ENCODE measurements at regions of chr13 and their contacts with region 1.

Region 1: DNA sequence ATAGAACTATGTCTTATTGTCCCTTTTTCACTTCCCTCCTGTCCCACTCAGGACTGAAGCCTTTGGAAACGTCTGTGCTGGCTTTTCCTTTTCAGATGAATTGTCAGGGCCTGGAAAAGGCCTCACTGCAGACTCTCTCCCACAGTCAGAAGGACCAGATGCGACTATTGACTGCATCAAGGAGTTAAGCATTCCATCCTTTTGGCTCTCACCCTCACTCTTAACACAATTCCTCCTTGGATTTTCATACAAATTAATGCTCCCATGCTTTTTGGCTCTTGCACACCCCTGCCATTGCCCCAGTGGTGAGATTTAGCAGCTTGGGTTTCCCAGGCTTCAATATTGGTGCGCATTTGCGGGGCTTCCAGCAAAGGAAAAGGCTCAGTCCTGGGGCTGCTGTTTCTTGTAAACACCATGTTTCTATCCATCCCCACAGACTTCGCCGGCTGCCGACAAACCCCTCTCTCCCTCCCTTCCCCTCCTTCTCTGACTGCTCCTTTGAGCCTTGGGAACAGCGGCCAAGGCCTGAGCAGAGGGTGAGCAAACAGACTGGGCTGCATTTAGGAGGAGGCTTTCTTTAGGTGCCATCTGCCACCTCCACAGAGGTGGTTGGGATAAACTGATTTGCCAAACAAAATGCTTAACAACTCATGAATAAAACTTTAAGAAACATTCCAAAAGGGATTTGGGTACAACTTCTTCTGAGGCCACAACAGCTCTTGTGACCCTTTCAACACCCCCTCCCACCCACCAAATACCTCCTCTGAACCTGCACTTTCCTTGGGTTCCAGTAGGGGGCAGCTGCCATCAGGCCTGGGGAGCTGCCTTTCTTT is 48.6 kb upstream of the PCDH8 start:
- DNase-seq: peak; percentile 71
- ATAC-seq: peak; percentile 88
- H3K4me3 Mint-ChIP-seq: no peak overlapping the region
- H3K27ac Mint-ChIP-seq: no peak overlapping the region
- H3K4me1 Mint-ChIP-seq: peaks cover 58% of the 10 kb centered on the region
- H3K27me3 Mint-ChIP-seq: peaks cover 34% of the 10 kb centered on the region
- CTCF ChIP-seq: peak; percentile 90

Region 2: DNA sequence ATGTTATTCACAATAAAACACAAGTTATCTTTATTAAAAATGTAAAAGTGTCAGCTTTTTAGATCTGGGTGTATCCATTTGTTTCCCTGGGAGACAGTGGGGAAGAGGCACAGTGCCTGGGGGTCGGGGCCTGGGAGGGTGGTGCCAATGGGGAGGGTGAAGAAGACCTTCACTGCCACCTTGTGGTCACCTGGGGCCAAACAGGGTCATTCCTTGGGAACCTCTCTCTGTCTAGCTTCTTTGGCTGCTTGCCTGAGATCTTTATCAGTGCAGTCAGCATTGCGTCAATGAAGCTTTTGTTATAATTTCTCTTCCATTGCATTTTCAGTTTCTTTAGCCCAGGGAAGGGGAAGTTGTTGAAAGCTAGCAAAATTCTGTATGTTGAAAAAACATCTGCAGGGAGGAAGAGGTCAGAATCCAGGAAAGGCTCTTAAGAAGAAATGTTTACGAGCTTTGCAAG is 87.7 kb before region 1 on chr13:
- CTCF ChIA-PET with region 1: no interaction called
- POLR2A ChIA-PET with region 1: no interaction called
- DNase-seq: peak; percentile 83
- ATAC-seq: peak; percentile 96
- H3K4me3 Mint-ChIP-seq: no peak overlapping the region
- H3K27ac Mint-ChIP-seq: no peak overlapping the region
- H3K4me1 Mint-ChIP-seq: peaks cover 16% of the 10 kb centered on the region
- H3K27me3 Mint-ChIP-seq: no peaks in the 10 kb centered on the region
- CTCF ChIP-seq: peak; percentile 80

Region 3: DNA sequence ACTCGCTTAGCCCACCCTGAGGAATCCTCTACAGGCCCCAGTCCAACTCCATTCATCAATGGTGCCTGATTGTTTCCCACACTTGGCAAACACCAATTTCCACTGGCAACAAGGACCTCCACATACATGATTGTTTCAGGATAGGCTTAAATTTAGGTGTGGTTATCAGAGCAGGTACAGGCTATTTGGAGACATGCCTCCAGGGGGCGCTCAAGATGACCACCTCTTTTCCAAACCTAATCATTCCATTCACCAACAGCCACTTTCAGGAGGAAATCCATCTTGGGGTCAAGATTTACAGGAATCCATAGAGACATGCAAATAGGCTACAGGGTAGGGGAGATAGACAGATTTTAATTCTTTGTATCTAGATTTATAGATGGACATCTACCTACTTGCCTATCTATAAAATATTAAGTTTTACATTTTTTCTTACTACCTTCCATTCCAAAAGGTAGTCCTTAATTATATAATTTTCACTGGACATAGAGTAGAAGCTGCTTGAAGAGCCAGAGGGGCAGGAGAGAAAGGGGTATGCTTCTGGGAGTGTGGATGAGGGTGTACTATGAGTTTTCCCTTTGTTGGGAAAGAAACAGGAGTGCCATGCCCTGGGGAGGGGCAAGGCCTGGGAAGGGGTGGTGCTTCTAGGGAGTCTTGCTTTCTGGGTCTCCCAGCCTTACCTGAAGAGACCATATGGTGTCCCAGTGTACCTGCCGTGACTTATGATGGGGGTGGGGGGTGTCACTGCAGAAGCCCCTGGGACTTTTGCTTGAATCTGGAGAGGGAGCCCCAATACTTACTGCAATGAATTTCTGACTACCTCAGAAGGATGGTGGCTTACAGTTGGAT is 34.5 kb before region 1 on chr13:
- CTCF ChIA-PET with region 1: interaction called, 10 read pairs
- POLR2A ChIA-PET with region 1: no interaction called
- DNase-seq: peak; percentile 74
- ATAC-seq: peak; percentile 85
- H3K4me3 Mint-ChIP-seq: no peak overlapping the region
- H3K27ac Mint-ChIP-seq: no peak overlapping the region
- H3K4me1 Mint-ChIP-seq: peaks cover 18% of the 10 kb centered on the region
- H3K27me3 Mint-ChIP-seq: peaks cover 48% of the 10 kb centered on the region
- CTCF ChIP-seq: peak; percentile 80

Region 4: DNA sequence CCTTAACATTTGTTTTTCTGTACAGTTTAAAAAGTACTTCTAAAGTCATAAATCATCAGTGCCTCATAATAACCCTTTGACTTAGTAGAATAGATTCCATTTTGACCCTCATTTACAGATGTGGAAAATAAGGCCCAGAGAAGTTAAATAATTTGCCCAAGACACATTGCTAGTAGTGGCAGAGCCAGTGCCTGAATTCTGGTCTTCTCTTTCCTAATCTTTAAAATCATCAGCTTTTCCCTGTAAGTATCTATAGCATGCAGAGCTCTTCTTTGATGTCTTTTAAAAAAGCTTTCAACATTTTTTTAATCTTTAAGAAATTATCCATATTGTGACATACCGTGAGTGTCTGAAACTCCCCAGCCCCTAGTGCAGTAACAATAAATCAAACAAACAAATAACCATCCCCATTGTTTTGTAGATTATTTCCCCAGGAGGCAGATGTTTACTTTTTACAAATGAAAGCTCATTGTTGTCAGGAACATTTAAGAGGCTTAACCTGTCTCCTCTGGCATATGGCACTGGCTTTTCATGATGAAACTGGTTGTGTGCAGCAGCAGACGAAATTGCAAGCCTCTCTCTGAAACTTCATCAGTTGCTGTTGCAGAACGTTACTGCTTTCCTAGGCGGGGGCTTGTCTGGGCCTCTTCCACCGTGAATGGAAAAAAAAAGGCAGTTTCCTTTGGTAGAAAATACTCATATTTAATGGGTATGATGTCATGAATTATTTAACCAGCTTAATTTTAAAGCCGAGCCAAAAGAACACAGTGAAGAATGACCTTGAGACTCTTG is 16.9 kb before region 1 on chr13:
- CTCF ChIA-PET with region 1: interaction called, 17 read pairs
- POLR2A ChIA-PET with region 1: no interaction called
- DNase-seq: peak; percentile 26
- ATAC-seq: peak; percentile 85
- H3K4me3 Mint-ChIP-seq: peak overlapping the region; percentile 47
- H3K27ac Mint-ChIP-seq: peak overlapping the region; percentile 19; the same call in 1 of the 2 replicates
- H3K4me1 Mint-ChIP-seq: peaks cover 62% of the 10 kb centered on the region
- H3K27me3 Mint-ChIP-seq: peaks cover 98% of the 10 kb centered on the region
- CTCF ChIP-seq: no peak

Region 5: DNA sequence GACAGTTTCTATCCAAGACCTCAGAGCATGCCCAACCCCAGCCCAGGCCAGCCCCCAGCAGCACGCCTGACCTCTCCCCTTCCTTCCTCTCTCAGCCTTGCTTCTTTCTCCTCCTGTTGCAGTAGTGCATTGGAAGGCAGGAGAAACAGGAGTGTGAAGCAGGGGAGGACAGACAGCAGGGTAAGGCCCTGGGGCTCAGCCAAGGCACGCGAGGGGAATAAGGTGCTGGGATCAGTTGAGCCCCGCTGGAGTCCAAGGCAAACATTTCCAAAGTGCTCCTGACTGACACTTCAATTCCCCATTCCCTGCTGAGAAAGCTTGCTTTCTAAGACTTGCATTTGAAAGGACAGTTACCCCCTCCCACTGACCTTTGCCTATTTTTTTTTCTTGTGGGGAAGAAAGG is 58.4 kb after region 1 on chr13:
- CTCF ChIA-PET with region 1: interaction called, 25 read pairs
- POLR2A ChIA-PET with region 1: no interaction called
- DNase-seq: peak; percentile 53
- ATAC-seq: peak; percentile 88
- H3K4me3 Mint-ChIP-seq: peak overlapping the region; percentile 47
- H3K27ac Mint-ChIP-seq: peak overlapping the region; percentile 84
- H3K4me1 Mint-ChIP-seq: peaks cover 68% of the 10 kb centered on the region
- H3K27me3 Mint-ChIP-seq: peaks cover 41% of the 10 kb centered on the region
- CTCF ChIP-seq: no peak

Region 6: DNA sequence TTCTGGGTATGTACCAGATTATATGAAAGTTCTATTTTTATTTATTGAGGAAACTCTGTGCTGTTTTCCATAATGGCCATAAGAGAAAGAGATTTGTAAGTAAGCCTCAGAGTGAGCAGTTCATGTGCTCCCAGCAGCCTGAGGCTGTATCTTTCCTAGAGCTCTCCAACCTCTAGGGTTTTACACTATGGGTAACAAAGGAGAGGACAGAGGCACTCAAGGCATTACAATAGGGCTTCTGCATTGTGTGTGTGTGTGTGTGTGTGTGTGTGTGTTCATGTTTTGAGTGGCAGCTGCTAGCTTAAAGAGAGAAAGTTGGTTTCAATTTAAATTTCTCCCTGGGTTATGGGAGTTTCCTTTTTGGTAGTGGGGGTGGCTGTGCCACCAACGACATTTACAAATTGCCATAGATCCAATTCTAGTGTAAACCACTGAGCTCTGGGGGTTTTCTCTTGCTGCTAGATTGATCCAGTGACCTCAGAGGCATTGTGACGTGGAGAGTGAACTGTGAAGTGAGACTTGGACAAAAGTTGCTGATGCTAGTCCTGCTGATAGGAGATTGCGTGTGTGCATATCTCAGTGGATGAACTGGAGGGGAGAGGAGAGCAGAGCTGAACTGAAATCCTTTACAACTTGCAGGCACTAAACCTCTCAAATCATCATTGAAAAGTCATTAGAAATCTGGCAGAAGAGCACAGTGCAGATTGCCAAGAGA is 64.3 kb after region 1 on chr13:
- CTCF ChIA-PET with region 1: interaction called, 80 read pairs
- POLR2A ChIA-PET with region 1: no interaction called
- DNase-seq: no peak
- ATAC-seq: peak; percentile 86
- H3K4me3 Mint-ChIP-seq: no peak overlapping the region
- H3K27ac Mint-ChIP-seq: no peak overlapping the region
- H3K4me1 Mint-ChIP-seq: peaks cover 27% of the 10 kb centered on the region
- H3K27me3 Mint-ChIP-seq: peaks cover 38% of the 10 kb centered on the region
- CTCF ChIP-seq: no peak

Region 7: GRCh38 chr13:53200498-53201453 is 303.7 kb after region 1 on chr13:
- CTCF ChIA-PET with region 1: interaction called, 11 read pairs
- POLR2A ChIA-PET with region 1: no interaction called
- DNase-seq: peak; percentile 90
- ATAC-seq: peak; percentile 78
- H3K4me3 Mint-ChIP-seq: peak overlapping the region; percentile 55
- H3K27ac Mint-ChIP-seq: no peak overlapping the region
- H3K4me1 Mint-ChIP-seq: no peaks in the 10 kb centered on the region
- H3K27me3 Mint-ChIP-seq: peaks cover 62% of the 10 kb centered on the region
- CTCF ChIP-seq: peak; percentile 92

Measured in WTC11 (cell line).